Thyroid gland (tissue), 4 donors: ENCODE measurements at regions of chr20 and their contacts with region 1.

Region 1: GRCh38 chr20:22453239-22454080 is 130.9 kb downstream of the FOXA2 start:
- DNase-seq: peak; percentile 5 to 19
- H3K4me3 ChIP-seq: no peak overlapping the region
- H3K27ac ChIP-seq: no peak overlapping the region
- H3K4me1 ChIP-seq: peaks cover 13% of the 10 kb centered on the region in 2 donors
- H3K27me3 ChIP-seq: no peaks in the 10 kb centered on the region
- CTCF ChIP-seq: peak; percentile 20 to 73 (median 54)
- POLR2A ChIP-seq: no peak

Region 2: GRCh38 chr20:22385602-22386305 is 67.7 kb before region 1 on chr20:
- intact Hi-C with region 1: loop called (anchors 10 kb)
- DNase-seq: no peak
- H3K4me3 ChIP-seq: no peak overlapping the region
- H3K27ac ChIP-seq: no peak overlapping the region
- H3K4me1 ChIP-seq: peaks cover 0 to 5% of the 10 kb centered on the region in 2 donors
- H3K27me3 ChIP-seq: no peaks in the 10 kb centered on the region
- CTCF ChIP-seq: peak in 3 of 6 experiments; percentile 16 to 27 (median 23)
- POLR2A ChIP-seq: no peak

Region 3: GRCh38 chr20:22586645-22587310 is 133.3 kb after region 1 on chr20:
- intact Hi-C with region 1: loop called (anchors 10 kb)
- DNase-seq: peak; percentile 61 to 79
- H3K4me3 ChIP-seq: peak overlapping the region in 1 of 3 donors; percentile 22
- H3K27ac ChIP-seq: peak overlapping the region in 2 of 3 donors; percentile 70 to 87
- H3K4me1 ChIP-seq: peaks cover 14 to 27% of the 10 kb centered on the region in 2 donors
- H3K27me3 ChIP-seq: no peaks in the 10 kb centered on the region
- CTCF ChIP-seq: peak in 5 of 6 experiments; percentile 58 to 83 (median 72)
- POLR2A ChIP-seq: peak in 1 of 2 donors; percentile 76

Region 4: GRCh38 chr20:22684072-22684762 is 230.8 kb after region 1 on chr20:
- intact Hi-C with region 1: loop called (anchors 10 kb)
- DNase-seq: peak; percentile 76 to 78
- H3K4me3 ChIP-seq: no peak overlapping the region
- H3K27ac ChIP-seq: peak overlapping the region in 2 of 3 donors; percentile 25 to 48
- H3K4me1 ChIP-seq: peaks cover 17 to 36% of the 10 kb centered on the region in 2 donors
- H3K27me3 ChIP-seq: no peaks in the 10 kb centered on the region
- CTCF ChIP-seq: peak; percentile 72 to 96 (median 90)
- POLR2A ChIP-seq: no peak